CD8-positive, alpha-beta T cell (primary cell): ENCODE measurements at regions of chr7 and their contacts with region 1.

Region 1: DNA sequence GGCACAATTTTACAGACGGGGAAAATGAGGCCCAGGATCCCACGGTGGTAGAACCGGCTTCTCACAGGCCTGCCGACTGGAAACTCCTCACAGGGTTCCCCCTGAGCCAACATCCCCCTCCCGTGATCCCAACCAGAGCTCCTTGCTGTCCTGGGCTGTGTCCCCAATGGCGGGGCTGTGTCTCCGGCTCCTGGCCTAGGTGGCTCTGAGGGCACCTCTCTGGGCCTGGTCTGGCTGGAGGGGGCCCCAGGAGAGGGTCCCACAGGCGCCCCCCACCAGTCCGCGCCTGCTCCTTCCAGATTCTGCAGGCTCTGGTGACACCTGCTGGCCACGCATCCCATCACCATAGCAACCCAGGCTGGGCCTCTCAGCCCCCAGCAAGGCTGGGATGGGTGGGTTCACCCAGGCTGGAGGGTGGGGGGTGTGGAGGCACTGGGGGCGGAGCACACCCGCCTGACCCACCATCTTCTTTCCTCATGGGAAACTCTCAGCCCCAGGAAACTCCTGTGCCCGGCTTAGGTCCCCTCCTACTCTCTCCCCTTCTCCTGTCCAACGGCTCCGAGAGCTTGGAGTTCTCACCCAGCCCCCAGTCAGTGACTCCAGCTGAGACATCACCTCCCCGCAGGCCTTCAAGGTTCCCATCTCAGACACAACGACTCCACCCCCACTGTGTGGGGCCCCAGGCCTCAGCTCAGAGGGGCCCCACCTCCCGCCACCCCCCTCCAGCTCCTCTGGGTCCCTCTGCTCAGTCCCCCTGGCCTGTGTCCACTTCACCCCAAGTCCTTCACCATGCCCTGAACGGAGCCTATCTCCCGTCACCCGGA is 27.1 kb upstream of the TNRC18 start:
- DNase-seq: peak in 8 of 9 experiments; percentile 19 to 67 (median 51)
- ATAC-seq: peak; percentile 79
- H3K4me3 ChIP-seq: no peak overlapping the region
- H3K4me3 Mint-ChIP-seq: no peak overlapping the region
- H3K27ac ChIP-seq: no peak overlapping the region
- H3K27ac Mint-ChIP-seq: no peak overlapping the region
- H3K4me1 ChIP-seq: no peaks in the 10 kb centered on the region
- H3K4me1 Mint-ChIP-seq: no peaks in the 10 kb centered on the region
- H3K27me3 ChIP-seq: no peaks in the 10 kb centered on the region
- H3K27me3 Mint-ChIP-seq: peaks cover 2% of the 10 kb centered on the region
- CTCF ChIP-seq: peak; percentile 39

Region 2: GRCh38 chr7:5248201-5248885 is 202.4 kb before region 1 on chr7:
- CTCF ChIA-PET with region 1: no interaction called
- POLR2A ChIA-PET with region 1: no interaction called
- intact Hi-C with region 1: loop called in 1 of 2 experiments (anchors 10 kb)
- DNase-seq: no peak
- ATAC-seq: no peak
- H3K4me3 ChIP-seq: no peak overlapping the region
- H3K4me3 Mint-ChIP-seq: no peak overlapping the region
- H3K27ac ChIP-seq: no peak overlapping the region
- H3K27ac Mint-ChIP-seq: no peak overlapping the region
- H3K4me1 ChIP-seq: no peaks in the 10 kb centered on the region
- H3K4me1 Mint-ChIP-seq: no peaks in the 10 kb centered on the region
- H3K27me3 ChIP-seq: no peaks in the 10 kb centered on the region
- H3K27me3 Mint-ChIP-seq: no peaks in the 10 kb centered on the region
- CTCF ChIP-seq: no peak

Region 3: GRCh38 chr7:5302577-5302976 is 148.2 kb before region 1 on chr7:
- CTCF ChIA-PET with region 1: no interaction called
- POLR2A ChIA-PET with region 1: no interaction called
- intact Hi-C with region 1: no loop called
- DNase-seq: no peak
- ATAC-seq: no peak
- H3K4me3 ChIP-seq: no peak overlapping the region
- H3K4me3 Mint-ChIP-seq: no peak overlapping the region
- H3K27ac ChIP-seq: no peak overlapping the region
- H3K27ac Mint-ChIP-seq: no peak overlapping the region
- H3K4me1 ChIP-seq: peaks cover 2% of the 10 kb centered on the region
- H3K4me1 Mint-ChIP-seq: peaks cover 2% of the 10 kb centered on the region
- H3K27me3 ChIP-seq: no peaks in the 10 kb centered on the region
- H3K27me3 Mint-ChIP-seq: peaks cover 5% of the 10 kb centered on the region
- CTCF ChIP-seq: no peak

Region 4: GRCh38 chr7:5363729-5364128 is 87.0 kb before region 1 on chr7:
- CTCF ChIA-PET with region 1: interaction called, 37 read pairs
- POLR2A ChIA-PET with region 1: no interaction called
- intact Hi-C with region 1: loop called in 1 of 2 experiments (anchors 1 kb)
- DNase-seq: no peak
- ATAC-seq: no peak
- H3K4me3 ChIP-seq: no peak overlapping the region
- H3K4me3 Mint-ChIP-seq: no peak overlapping the region
- H3K27ac ChIP-seq: no peak overlapping the region
- H3K27ac Mint-ChIP-seq: no peak overlapping the region
- H3K4me1 ChIP-seq: no peaks in the 10 kb centered on the region
- H3K4me1 Mint-ChIP-seq: peaks cover 20% of the 10 kb centered on the region
- H3K27me3 ChIP-seq: no peaks in the 10 kb centered on the region
- H3K27me3 Mint-ChIP-seq: no peaks in the 10 kb centered on the region
- CTCF ChIP-seq: no peak

Region 5: GRCh38 chr7:5661942-5662341 is 211.2 kb after region 1 on chr7:
- CTCF ChIA-PET with region 1: no interaction called
- POLR2A ChIA-PET with region 1: no interaction called
- intact Hi-C with region 1: no loop called
- DNase-seq: peak in 3 of 9 experiments; percentile 20 to 47 (median 29)
- ATAC-seq: peak; percentile 50
- H3K4me3 ChIP-seq: no peak overlapping the region
- H3K4me3 Mint-ChIP-seq: peak overlapping the region; percentile 15
- H3K27ac ChIP-seq: no peak overlapping the region
- H3K27ac Mint-ChIP-seq: peak overlapping the region; percentile 18
- H3K4me1 ChIP-seq: peaks cover 15% of the 10 kb centered on the region
- H3K4me1 Mint-ChIP-seq: peaks cover 26% of the 10 kb centered on the region
- H3K27me3 ChIP-seq: no peaks in the 10 kb centered on the region
- H3K27me3 Mint-ChIP-seq: no peaks in the 10 kb centered on the region
- CTCF ChIP-seq: no peak

Region 6: GRCh38 chr7:6198689-6199595 is 748.2 kb after region 1 on chr7:
- CTCF ChIA-PET with region 1: no interaction called
- POLR2A ChIA-PET with region 1: no interaction called
- intact Hi-C with region 1: no loop called
- DNase-seq: no peak
- ATAC-seq: no peak
- H3K4me3 ChIP-seq: no peak overlapping the region
- H3K4me3 Mint-ChIP-seq: no peak overlapping the region
- H3K27ac ChIP-seq: no peak overlapping the region
- H3K27ac Mint-ChIP-seq: no peak overlapping the region
- H3K4me1 ChIP-seq: no peaks in the 10 kb centered on the region
- H3K4me1 Mint-ChIP-seq: peaks cover 2% of the 10 kb centered on the region
- H3K27me3 ChIP-seq: no peaks in the 10 kb centered on the region
- H3K27me3 Mint-ChIP-seq: no peaks in the 10 kb centered on the region
- CTCF ChIP-seq: no peak